ENCODE measurements at regions of chr12 and their contacts with region 1.

Region 1: GRCh38 chr12:55629058-55629841 is 7.4 kb upstream of the OR10P1 start:
- DNase-seq: no peak
- H3K4me3 ChIP-seq: no peak overlapping the region
- H3K27ac ChIP-seq: no peak overlapping the region
- H3K4me1 ChIP-seq: no peaks in the 10 kb centered on the region
- H3K27me3 ChIP-seq: peaks cover 4% of the 10 kb centered on the region
- CTCF ChIP-seq: no peak

Region 2: GRCh38 chr12:55659486-55660385 is 30.5 kb after region 1 on chr12:
- CTCF ChIA-PET with region 1: interaction called, 11 read pairs
- dilution Hi-C with region 1: no loop called
- in situ Hi-C with region 1: no loop called
- intact Hi-C with region 1: no loop called
- DNase-seq: no peak
- H3K4me3 ChIP-seq: no peak overlapping the region
- H3K27ac ChIP-seq: no peak overlapping the region
- H3K4me1 ChIP-seq: no peaks in the 10 kb centered on the region
- H3K27me3 ChIP-seq: no peaks in the 10 kb centered on the region
- CTCF ChIP-seq: peak; percentile 31 to 40

Region 3: GRCh38 chr12:55673638-55674037 is 44.4 kb after region 1 on chr12:
- CTCF ChIA-PET with region 1: no interaction called
- dilution Hi-C with region 1: no loop called
- in situ Hi-C with region 1: no loop called
- intact Hi-C with region 1: no loop called
- DNase-seq: no peak
- H3K4me3 ChIP-seq: no peak overlapping the region
- H3K27ac ChIP-seq: no peak overlapping the region
- H3K4me1 ChIP-seq: no peaks in the 10 kb centered on the region
- H3K27me3 ChIP-seq: no peaks in the 10 kb centered on the region
- CTCF ChIP-seq: no peak

Region 4: GRCh38 chr12:55687746-55688145 is 58.5 kb after region 1 on chr12:
- CTCF ChIA-PET with region 1: no interaction called
- dilution Hi-C with region 1: loop called (anchors 5 kb)
- in situ Hi-C with region 1: no loop called
- intact Hi-C with region 1: no loop called
- DNase-seq: peak; percentile 23
- H3K4me3 ChIP-seq: no peak overlapping the region
- H3K27ac ChIP-seq: no peak overlapping the region
- H3K4me1 ChIP-seq: no peaks in the 10 kb centered on the region
- H3K27me3 ChIP-seq: no peaks in the 10 kb centered on the region
- CTCF ChIP-seq: no peak

Measured in mammary epithelial cell (primary cell).